H1 (cell line): ENCODE measurements at regions of chr4 and their contacts with region 1.

Region 1: GRCh38 chr4:169810325-169811323 is 52.9 kb upstream of the HPF1 start:
- DNase-seq: no peak
- H3K4me3 ChIP-seq: no peak overlapping the region
- H3K27ac ChIP-seq: no peak overlapping the region
- H3K4me1 ChIP-seq: no peaks in the 10 kb centered on the region
- H3K27me3 ChIP-seq: no peaks in the 10 kb centered on the region
- CTCF ChIP-seq: peak in 2 of 3 experiments; percentile 73 to 77; a peak in 3 of 4 replicates
- EP300 ChIP-seq: no peak
- POLR2A ChIP-seq: no peak
- RAD21 ChIP-seq: peak; percentile 84 to 88

Region 2: GRCh38 chr4:169593050-169593560 is 217.5 kb before region 1 on chr4:
- CTCF ChIA-PET with region 1: no interaction called
- POLR2A ChIA-PET with region 1: no interaction called
- DNase-seq: no peak
- H3K4me3 ChIP-seq: no peak overlapping the region
- H3K27ac ChIP-seq: no peak overlapping the region
- H3K4me1 ChIP-seq: no peaks in the 10 kb centered on the region
- H3K27me3 ChIP-seq: no peaks in the 10 kb centered on the region
- CTCF ChIP-seq: no peak
- EP300 ChIP-seq: no peak
- POLR2A ChIP-seq: no peak
- RAD21 ChIP-seq: no peak

Region 3: GRCh38 chr4:169682372-169683047 is 128.1 kb before region 1 on chr4:
- CTCF ChIA-PET with region 1: no interaction called
- POLR2A ChIA-PET with region 1: no interaction called
- DNase-seq: no peak
- H3K4me3 ChIP-seq: no peak overlapping the region
- H3K27ac ChIP-seq: no peak overlapping the region
- H3K4me1 ChIP-seq: no peaks in the 10 kb centered on the region
- H3K27me3 ChIP-seq: no peaks in the 10 kb centered on the region
- CTCF ChIP-seq: no peak
- EP300 ChIP-seq: no peak
- POLR2A ChIP-seq: no peak
- RAD21 ChIP-seq: no peak

Region 4: DNA sequence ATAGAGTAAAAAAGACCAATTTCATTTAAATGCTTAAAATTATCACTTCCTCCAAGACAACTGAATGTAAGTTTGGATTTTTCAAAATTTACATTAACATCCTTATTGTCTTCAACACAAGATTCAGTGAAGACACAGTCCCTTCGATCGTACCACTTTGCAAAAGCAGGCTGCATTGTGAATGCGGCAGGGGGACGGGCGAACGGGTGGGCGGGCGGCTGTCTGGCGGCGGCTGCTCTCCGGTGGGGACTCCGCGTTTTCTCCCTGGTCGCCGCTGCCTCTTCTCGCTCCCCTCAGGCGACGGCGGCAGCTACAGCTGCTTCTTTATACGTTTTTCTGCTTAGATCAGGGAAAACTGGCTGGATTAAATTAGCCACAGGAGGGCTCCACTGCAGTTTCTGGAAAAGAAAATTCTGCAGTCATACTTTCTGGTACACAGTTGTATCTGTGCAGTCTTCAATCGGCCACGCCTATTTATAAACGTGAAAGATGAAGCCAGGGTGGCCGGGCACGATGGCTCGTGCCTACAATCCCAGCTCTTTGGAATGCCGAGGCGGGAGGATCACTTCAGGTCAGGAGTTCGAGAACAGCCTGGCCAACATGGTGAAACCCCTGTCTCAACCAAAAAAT is 19.0 kb before region 1 on chr4:
- CTCF ChIA-PET with region 1: interaction called, 17 read pairs
- POLR2A ChIA-PET with region 1: no interaction called
- DNase-seq: peak; percentile 17 to 66
- H3K4me3 ChIP-seq: peak overlapping the region; percentile 25 to 49 (median 29); a peak in 5 of 8 replicates
- H3K27ac ChIP-seq: no peak overlapping the region
- H3K4me1 ChIP-seq: no peaks in the 10 kb centered on the region; a peak in 1 of 7 replicates
- H3K27me3 ChIP-seq: peaks cover 0 to 6% (median 0%) of the 10 kb centered on the region in 4 experiments; a peak in 3 of 7 replicates
- CTCF ChIP-seq: peak in 1 of 3 experiments; percentile 13; a peak in 2 of 4 replicates
- EP300 ChIP-seq: no peak
- POLR2A ChIP-seq: no peak
- RAD21 ChIP-seq: peak; percentile 5 to 29; a peak in 3 of 4 replicates

Region 5: GRCh38 chr4:169823685-169824084 is 13.1 kb after region 1 on chr4:
- CTCF ChIA-PET with region 1: interaction called, 21 read pairs
- POLR2A ChIA-PET with region 1: no interaction called
- DNase-seq: peak; percentile 31 to 58
- H3K4me3 ChIP-seq: no peak overlapping the region
- H3K27ac ChIP-seq: no peak overlapping the region
- H3K4me1 ChIP-seq: no peaks in the 10 kb centered on the region
- H3K27me3 ChIP-seq: no peaks in the 10 kb centered on the region
- CTCF ChIP-seq: no peak
- EP300 ChIP-seq: no peak
- POLR2A ChIP-seq: no peak
- RAD21 ChIP-seq: peak in 1 of 2 experiments; percentile 2; a peak in 1 of 4 replicates

Region 6: GRCh38 chr4:169849456-169849855 is 38.8 kb after region 1 on chr4:
- CTCF ChIA-PET with region 1: interaction called, 13 read pairs
- POLR2A ChIA-PET with region 1: no interaction called
- DNase-seq: no peak
- H3K4me3 ChIP-seq: no peak overlapping the region
- H3K27ac ChIP-seq: no peak overlapping the region
- H3K4me1 ChIP-seq: no peaks in the 10 kb centered on the region
- H3K27me3 ChIP-seq: no peaks in the 10 kb centered on the region
- CTCF ChIP-seq: no peak
- EP300 ChIP-seq: no peak
- POLR2A ChIP-seq: no peak
- RAD21 ChIP-seq: no peak

Region 7: GRCh38 chr4:170027181-170027829 is 216.7 kb after region 1 on chr4:
- CTCF ChIA-PET with region 1: interaction called, 39 read pairs
- POLR2A ChIA-PET with region 1: no interaction called
- DNase-seq: peak; percentile 72 to 98
- H3K4me3 ChIP-seq: peak overlapping the region; percentile 71 to 98 (median 78)
- H3K27ac ChIP-seq: no peak overlapping the region
- H3K4me1 ChIP-seq: peaks cover 0 to 3% (median 3%) of the 10 kb centered on the region in 4 experiments; a peak in 4 of 7 replicates
- H3K27me3 ChIP-seq: peaks cover 4 to 29% (median 22%) of the 10 kb centered on the region in 4 experiments
- CTCF ChIP-seq: no peak
- EP300 ChIP-seq: peak in 1 of 2 experiments; percentile 61; a peak in 1 of 3 replicates
- POLR2A ChIP-seq: no peak; a peak in 1 of 3 replicates
- RAD21 ChIP-seq: no peak; a peak in 1 of 4 replicates

Region 8: GRCh38 chr4:170057866-170058265 is 247.2 kb after region 1 on chr4:
- CTCF ChIA-PET with region 1: interaction called, 12 read pairs
- POLR2A ChIA-PET with region 1: no interaction called
- DNase-seq: no peak
- H3K4me3 ChIP-seq: no peak overlapping the region
- H3K27ac ChIP-seq: no peak overlapping the region
- H3K4me1 ChIP-seq: peaks cover 0 to 5% (median 0%) of the 10 kb centered on the region in 4 experiments; a peak in 1 of 7 replicates
- H3K27me3 ChIP-seq: peaks cover 0 to 2% (median 0%) of the 10 kb centered on the region in 4 experiments; a peak in 1 of 7 replicates
- CTCF ChIP-seq: no peak
- EP300 ChIP-seq: no peak
- POLR2A ChIP-seq: no peak
- RAD21 ChIP-seq: no peak